ENCODE measurements at regions of chr4 and their contacts with region 1.

Region 1: GRCh38 chr4:75724066-75724866 is at the start of gene USO1:
- DNase-seq: peak; percentile 99 to 100 (median 100)
- ATAC-seq: peak; percentile 93 to 97 (median 94)
- H3K4me3 ChIP-seq: peak within 1 kb of the TSS; percentile 42 to 83 (median 72)
- H3K27ac ChIP-seq: peak within 1 kb of the TSS; percentile 95 to 98 (median 96)
- H3K4me1 ChIP-seq: peaks cover 8 to 21% (median 15%) of the 10 kb centered on the region in 3 donors
- H3K27me3 ChIP-seq: no peaks in the 10 kb centered on the region
- CTCF ChIP-seq: peak; percentile 44 to 64 (median 48)
- total RNA-seq, gene USO1: 40.1 to 58.2 (median 55.6) TPM

Region 2: GRCh38 chr4:75673027-75673958 is 51.0 kb before region 1 on chr4 and contains the start of gene G3BP2:
- intact Hi-C with region 1: loop called in 1 of 3 experiments (anchors 10 kb)
- DNase-seq: peak; percentile 96 to 99 (median 98)
- ATAC-seq: peak; percentile 97 to 99 (median 98)
- H3K4me3 ChIP-seq: peak within 1 kb of the TSS; percentile 68 to 88 (median 84)
- H3K27ac ChIP-seq: peak within 1 kb of the TSS; percentile 86 to 95 (median 90)
- H3K4me1 ChIP-seq: peaks cover 4 to 26% (median 24%) of the 10 kb centered on the region in 3 donors
- H3K27me3 ChIP-seq: no peaks in the 10 kb centered on the region
- CTCF ChIP-seq: no peak
- total RNA-seq, gene G3BP2: 27.9 to 51.0 (median 42.4) TPM

Region 3: GRCh38 chr4:75916091-75916661 is 191.9 kb after region 1 on chr4:
- intact Hi-C with region 1: no loop called
- DNase-seq: peak in 3 of 6 donors; percentile 24 to 55 (median 28)
- ATAC-seq: peak; percentile 88 to 98 (median 96)
- H3K4me3 ChIP-seq: no peak overlapping the region
- H3K27ac ChIP-seq: peak overlapping the region in 2 of 4 donors; percentile 35 to 59
- H3K4me1 ChIP-seq: peaks cover 0 to 10% (median 4%) of the 10 kb centered on the region in 3 donors
- H3K27me3 ChIP-seq: no peaks in the 10 kb centered on the region
- CTCF ChIP-seq: peak; percentile 50 to 77 (median 72)